Colonic mucosa (tissue), 4 donors: ENCODE measurements at regions of chr6 and their contacts with region 1.

Region 1: DNA sequence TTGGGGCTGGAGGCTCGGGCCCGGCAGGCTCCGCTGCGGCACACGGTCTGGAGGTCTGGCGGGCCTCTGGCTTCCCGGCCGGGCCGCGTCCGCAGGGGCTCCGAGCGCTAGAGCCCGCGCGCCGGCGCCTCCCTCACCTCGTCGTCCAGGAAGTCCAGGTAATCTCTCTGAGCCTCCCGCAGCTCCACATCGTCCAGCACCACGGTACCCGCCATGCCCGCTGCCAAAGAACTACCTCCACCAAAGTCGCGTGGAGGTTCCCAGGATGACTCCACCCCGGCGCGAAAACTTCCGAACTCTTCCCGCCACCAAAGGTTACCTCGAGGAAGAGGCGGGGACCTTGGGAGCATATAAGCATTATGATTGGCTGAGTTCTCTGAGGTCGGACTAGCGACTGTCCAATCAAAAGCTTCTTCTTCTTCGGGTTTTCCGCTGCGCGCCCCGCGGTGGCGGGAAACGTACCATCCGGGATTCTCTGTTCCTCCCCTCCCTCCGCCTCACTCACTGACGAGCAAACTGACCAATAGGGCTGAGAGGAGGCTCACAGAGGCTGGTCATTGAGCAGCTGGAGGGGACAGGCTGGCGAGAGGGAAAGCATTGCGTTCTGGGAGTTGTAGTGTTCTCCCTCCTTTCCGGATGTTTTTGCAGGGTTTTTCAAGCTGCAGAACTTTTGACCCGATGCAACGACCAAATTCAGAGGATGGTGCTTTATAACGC is at the start of gene MCM3:
- DNase-seq: peak; percentile 98
- H3K4me3 ChIP-seq: peak within 1 kb of the TSS; percentile 87
- H3K27ac ChIP-seq: peak within 1 kb of the TSS; percentile 58
- H3K4me1 ChIP-seq: peaks cover 5% of the 10 kb centered on the region
- H3K27me3 ChIP-seq: no peaks in the 10 kb centered on the region
- CTCF ChIP-seq: no peak
- total RNA-seq, gene MCM3: 28.9 to 117 TPM

Region 2: DNA sequence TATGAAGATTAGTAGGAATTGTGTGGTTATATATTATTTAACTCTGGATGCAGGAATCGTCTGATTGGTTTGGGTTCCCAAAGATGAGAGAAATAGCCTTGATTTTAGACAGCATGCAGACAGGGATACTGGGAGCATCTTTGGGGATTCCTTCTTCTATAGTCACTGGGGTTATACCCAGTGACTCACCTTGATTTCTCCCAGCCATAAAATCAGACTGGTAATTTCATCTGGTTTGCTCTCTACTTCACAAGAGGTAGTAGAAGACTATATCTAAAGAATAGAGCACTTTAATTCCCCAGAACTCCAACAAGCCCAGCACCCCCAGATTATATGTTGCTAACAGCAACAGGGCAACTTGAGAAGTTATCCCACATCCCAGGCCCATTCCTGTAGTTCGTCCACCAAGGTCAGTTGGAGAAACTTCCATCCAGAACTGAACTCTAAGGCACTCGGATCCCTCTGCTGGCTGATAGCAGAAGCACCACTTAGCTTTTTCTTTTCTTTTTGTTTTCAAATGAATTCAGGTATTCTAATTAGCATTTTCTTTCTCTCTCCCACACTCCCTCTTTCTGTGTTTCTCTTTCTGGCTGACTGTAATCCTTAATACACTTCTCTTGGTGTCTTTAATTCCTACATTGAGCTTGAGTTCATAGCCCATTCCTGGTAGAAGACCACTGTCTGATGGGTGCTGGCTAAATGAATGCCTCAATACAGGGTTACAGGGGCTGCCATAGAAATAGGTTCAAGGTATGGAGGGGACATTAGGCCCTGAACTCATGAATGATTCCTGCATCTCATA is 115.1 kb after region 1 on chr6:
- intact Hi-C with region 1: loop called (anchors 5 kb)
- DNase-seq: peak; percentile 60
- H3K4me3 ChIP-seq: no peak overlapping the region
- H3K27ac ChIP-seq: peak overlapping the region; percentile 11
- H3K4me1 ChIP-seq: no peaks in the 10 kb centered on the region
- H3K27me3 ChIP-seq: no peaks in the 10 kb centered on the region
- CTCF ChIP-seq: peak; percentile 78